PC-3 (cell line): ENCODE measurements at regions of chr17 and their contacts with region 1.

Region 1: DNA sequence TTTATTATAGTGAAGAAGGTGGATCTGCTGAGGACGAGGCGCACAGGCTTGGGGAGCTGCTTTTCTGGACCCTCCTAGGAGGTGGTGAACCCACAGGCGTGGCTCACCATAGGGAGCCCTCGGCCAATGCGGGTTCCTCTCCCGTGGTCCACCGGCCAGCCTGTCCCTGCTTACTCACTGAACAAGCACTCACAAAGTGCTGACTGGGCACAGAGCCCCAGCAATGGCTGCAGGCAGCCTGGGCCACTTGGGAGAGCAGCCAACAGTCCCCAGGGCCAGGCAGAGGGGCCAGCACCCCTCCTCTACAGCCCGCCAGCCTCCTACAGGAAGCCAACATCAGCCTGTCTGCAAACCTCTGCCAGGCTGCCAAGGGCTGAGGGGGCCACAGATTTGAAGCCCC is 19.1 kb upstream of the NCBP3 start:
- DNase-seq: no peak
- ATAC-seq: peak; percentile 50
- H3K4me3 ChIP-seq: no peak overlapping the region
- H3K27ac ChIP-seq: no peak overlapping the region
- H3K4me1 ChIP-seq: no peaks in the 10 kb centered on the region
- H3K27me3 ChIP-seq: no peaks in the 10 kb centered on the region
- CTCF ChIP-seq: no peak

Region 2: GRCh38 chr17:3907483-3908216 is 42.5 kb after region 1 on chr17:
- CTCF ChIA-PET with region 1: no interaction called
- POLR2A ChIA-PET with region 1: no interaction called
- intact Hi-C with region 1: loop called (anchors 1 kb)
- DNase-seq: no peak
- ATAC-seq: peak; percentile 45; the same call in 1 of the 2 replicates
- H3K4me3 ChIP-seq: no peak overlapping the region
- H3K27ac ChIP-seq: no peak overlapping the region
- H3K4me1 ChIP-seq: no peaks in the 10 kb centered on the region
- H3K27me3 ChIP-seq: no peaks in the 10 kb centered on the region
- CTCF ChIP-seq: peak; percentile 49

Region 3: GRCh38 chr17:4426499-4427208 is 561.5 kb after region 1 on chr17:
- CTCF ChIA-PET with region 1: no interaction called
- POLR2A ChIA-PET with region 1: no interaction called
- intact Hi-C with region 1: no loop called
- DNase-seq: no peak
- ATAC-seq: no peak
- H3K4me3 ChIP-seq: no peak overlapping the region
- H3K27ac ChIP-seq: no peak overlapping the region
- H3K4me1 ChIP-seq: no peaks in the 10 kb centered on the region
- H3K27me3 ChIP-seq: no peaks in the 10 kb centered on the region
- CTCF ChIP-seq: no peak